PC-9 (cell line): ENCODE measurements at regions of chr6 and their contacts with region 1.

Region 1: DNA sequence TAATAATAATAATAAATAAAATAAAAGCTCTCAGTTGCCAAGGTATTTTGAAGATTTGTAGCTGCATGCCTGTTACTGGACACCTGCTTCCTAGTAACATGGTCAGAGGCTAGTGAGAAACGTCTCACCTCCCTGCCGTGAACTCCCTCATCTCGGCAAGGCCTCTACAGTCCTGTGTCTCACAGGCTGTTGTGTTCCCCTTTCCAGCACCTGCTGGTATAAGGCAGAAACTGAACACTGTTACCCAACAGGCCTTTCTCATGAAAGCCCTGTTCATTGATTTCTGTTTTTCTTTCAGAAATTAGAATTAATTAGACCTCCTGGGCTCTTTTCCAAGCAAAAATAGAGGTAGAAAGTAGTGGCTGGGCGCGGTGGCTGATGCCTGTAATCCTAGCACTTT is 17.6 kb upstream of the SRSF3 start:
- DNase-seq: no peak
- H3K4me3 ChIP-seq: no peak overlapping the region
- H3K27ac ChIP-seq: peak overlapping the region; percentile 73
- H3K4me1 ChIP-seq: peaks cover 63% of the 10 kb centered on the region
- H3K27me3 ChIP-seq: no peaks in the 10 kb centered on the region
- CTCF ChIP-seq: no peak

Region 2: DNA sequence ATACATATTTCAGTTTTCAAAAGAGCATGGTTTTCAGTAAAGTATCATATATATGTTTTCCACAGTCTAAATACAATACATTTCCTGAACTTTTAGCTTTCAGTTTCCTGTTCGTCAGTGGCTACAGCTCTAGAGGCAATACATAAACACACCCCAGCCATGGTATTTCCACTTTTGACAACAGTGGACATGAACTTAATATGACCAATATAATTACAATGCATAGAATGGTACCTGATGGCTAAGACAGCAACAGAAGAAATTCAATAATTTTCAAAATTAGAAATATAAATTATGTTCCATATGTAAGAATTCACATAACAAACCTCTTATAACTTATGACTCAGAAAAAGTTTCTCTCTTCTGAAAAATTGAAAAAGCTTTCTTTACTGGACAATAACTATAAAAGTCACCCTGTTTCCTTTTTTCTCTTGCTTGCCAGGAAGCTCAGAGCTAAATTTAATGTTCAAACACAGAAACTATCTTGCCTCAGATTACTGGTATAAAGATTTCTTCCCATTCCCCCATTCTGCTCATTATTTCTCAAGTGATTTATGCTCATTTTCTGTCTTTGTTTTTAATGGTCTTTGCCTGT is 907.0 kb before region 1 on chr6:
- CTCF ChIA-PET with region 1: no interaction called
- POLR2A ChIA-PET with region 1: no interaction called
- intact Hi-C with region 1: no loop called
- DNase-seq: no peak
- H3K4me3 ChIP-seq: no peak overlapping the region
- H3K27ac ChIP-seq: no peak overlapping the region
- H3K4me1 ChIP-seq: no peaks in the 10 kb centered on the region
- H3K27me3 ChIP-seq: no peaks in the 10 kb centered on the region
- CTCF ChIP-seq: no peak

Region 3: GRCh38 chr6:36027501-36028087 is 549.0 kb before region 1 on chr6 and contains the start of gene MAPK14:
- CTCF ChIA-PET with region 1: interaction called, 3 read pairs
- POLR2A ChIA-PET with region 1: interaction called, 22 read pairs
- intact Hi-C with region 1: no loop called
- DNase-seq: peak; percentile 98
- H3K4me3 ChIP-seq: peak within 1 kb of the TSS; percentile 85
- H3K27ac ChIP-seq: peak within 1 kb of the TSS; percentile 87
- H3K4me1 ChIP-seq: peaks cover 8% of the 10 kb centered on the region
- H3K27me3 ChIP-seq: no peaks in the 10 kb centered on the region
- CTCF ChIP-seq: peak; percentile 75
- total RNA-seq, gene MAPK14: 60.4 and 70.7 TPM in 2 replicates

Region 4: GRCh38 chr6:36083446-36083845 is 493.1 kb before region 1 on chr6:
- CTCF ChIA-PET with region 1: no interaction called
- POLR2A ChIA-PET with region 1: no interaction called
- intact Hi-C with region 1: no loop called
- DNase-seq: no peak
- H3K4me3 ChIP-seq: no peak overlapping the region
- H3K27ac ChIP-seq: no peak overlapping the region
- H3K4me1 ChIP-seq: no peaks in the 10 kb centered on the region
- H3K27me3 ChIP-seq: no peaks in the 10 kb centered on the region
- CTCF ChIP-seq: no peak

Region 5: GRCh38 chr6:36094753-36095496 is 481.6 kb before region 1 on chr6:
- CTCF ChIA-PET with region 1: no interaction called
- POLR2A ChIA-PET with region 1: no interaction called
- intact Hi-C with region 1: no loop called
- DNase-seq: peak; percentile 66
- H3K4me3 ChIP-seq: no peak overlapping the region
- H3K27ac ChIP-seq: peak overlapping the region; percentile 35
- H3K4me1 ChIP-seq: no peaks in the 10 kb centered on the region; the same call in 1 of the 2 replicates
- H3K27me3 ChIP-seq: no peaks in the 10 kb centered on the region
- CTCF ChIP-seq: peak; percentile 97

Region 6: DNA sequence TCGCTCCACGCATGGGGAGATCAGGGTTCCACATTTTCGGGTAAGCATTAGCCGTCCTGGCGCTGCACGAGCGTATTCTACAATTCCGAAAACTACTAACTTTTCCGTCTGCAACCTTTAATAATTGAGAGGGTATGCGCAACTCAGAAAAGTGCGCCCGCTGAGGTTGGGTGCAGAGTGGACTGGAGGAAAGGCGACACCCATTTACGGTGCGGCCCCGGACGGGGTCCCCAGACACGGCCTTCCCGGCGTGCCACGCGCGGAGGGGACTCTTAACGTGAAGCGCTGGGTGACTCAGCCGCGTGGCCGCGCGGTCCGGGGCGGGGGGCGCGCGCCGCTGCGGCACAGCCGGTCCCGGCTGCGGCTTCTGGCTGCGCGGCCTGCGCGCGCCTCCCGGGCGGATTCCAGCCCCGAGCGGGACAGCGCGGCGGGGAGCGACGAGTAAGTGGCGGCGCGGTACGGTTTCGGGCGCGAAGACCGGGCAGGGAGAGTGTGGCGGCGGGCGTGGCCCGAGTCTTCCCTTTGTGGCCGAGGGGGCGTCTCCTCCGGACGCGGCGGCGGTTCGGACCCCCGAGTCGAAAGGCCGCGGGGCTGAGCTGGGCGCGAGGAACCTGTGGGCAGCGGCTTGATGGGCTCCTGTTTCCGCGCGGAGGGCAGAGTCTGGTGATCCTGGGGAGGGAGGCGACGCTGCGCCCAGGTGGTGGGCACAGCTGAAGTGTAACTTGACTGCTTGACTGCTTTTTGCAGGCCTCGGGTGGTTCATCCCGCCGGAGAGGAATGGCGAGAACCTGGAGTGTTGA is 133.7 kb before region 1 on chr6 and contains the starts of genes KCTD20 and PXT1:
- CTCF ChIA-PET with region 1: no interaction called
- POLR2A ChIA-PET with region 1: interaction called, 6 read pairs
- intact Hi-C with region 1: loop called (anchors 5 kb)
- DNase-seq: peak; percentile 67 to 88
- H3K4me3 ChIP-seq: peak within 1 kb of the TSS; percentile 75
- H3K27ac ChIP-seq: peak within 1 kb of the TSS; percentile 92
- H3K4me1 ChIP-seq: peaks cover 25% of the 10 kb centered on the region
- H3K27me3 ChIP-seq: no peaks in the 10 kb centered on the region
- CTCF ChIP-seq: no peak
- total RNA-seq, gene KCTD20: 34.2 and 42.5 TPM in 2 replicates
- total RNA-seq, gene PXT1: not detected in 2 replicates

Region 7: GRCh38 chr6:36514554-36515456 is 61.8 kb before region 1 on chr6:
- CTCF ChIA-PET with region 1: interaction called, 10 read pairs
- POLR2A ChIA-PET with region 1: no interaction called
- intact Hi-C with region 1: no loop called
- DNase-seq: no peak
- H3K4me3 ChIP-seq: no peak overlapping the region
- H3K27ac ChIP-seq: no peak overlapping the region
- H3K4me1 ChIP-seq: peaks cover 5% of the 10 kb centered on the region; the same call in 1 of the 2 replicates
- H3K27me3 ChIP-seq: no peaks in the 10 kb centered on the region
- CTCF ChIP-seq: no peak

Region 8: GRCh38 chr6:36563237-36563927 is 13.2 kb before region 1 on chr6:
- CTCF ChIA-PET with region 1: interaction called, 5 read pairs
- POLR2A ChIA-PET with region 1: interaction called, 11 read pairs
- intact Hi-C with region 1: no loop called
- DNase-seq: no peak
- H3K4me3 ChIP-seq: no peak overlapping the region
- H3K27ac ChIP-seq: no peak overlapping the region
- H3K4me1 ChIP-seq: peaks cover 12% of the 10 kb centered on the region
- H3K27me3 ChIP-seq: no peaks in the 10 kb centered on the region
- CTCF ChIP-seq: no peak

Region 9: GRCh38 chr6:36955671-36956445 is 379.3 kb after region 1 on chr6:
- CTCF ChIA-PET with region 1: no interaction called
- POLR2A ChIA-PET with region 1: no interaction called
- intact Hi-C with region 1: no loop called
- DNase-seq: peak; percentile 43 to 56
- H3K4me3 ChIP-seq: no peak overlapping the region
- H3K27ac ChIP-seq: no peak overlapping the region
- H3K4me1 ChIP-seq: peaks cover 23% of the 10 kb centered on the region
- H3K27me3 ChIP-seq: no peaks in the 10 kb centered on the region
- CTCF ChIP-seq: no peak